Right cardiac atrium (tissue), 5 donors: ENCODE measurements at regions of chr2 and their contacts with region 1.

Region 1: GRCh38 chr2:19677825-19678518 is 223.8 kb downstream of the TTC32 start:
- DNase-seq: peak; percentile 87 to 92 (median 91)
- ATAC-seq: peak; percentile 89 to 92
- H3K4me3 ChIP-seq: no peak overlapping the region
- H3K27ac ChIP-seq: peak overlapping the region; percentile 89
- H3K4me1 ChIP-seq: peaks cover 4% of the 10 kb centered on the region
- H3K27me3 ChIP-seq: no peaks in the 10 kb centered on the region

Region 2: DNA sequence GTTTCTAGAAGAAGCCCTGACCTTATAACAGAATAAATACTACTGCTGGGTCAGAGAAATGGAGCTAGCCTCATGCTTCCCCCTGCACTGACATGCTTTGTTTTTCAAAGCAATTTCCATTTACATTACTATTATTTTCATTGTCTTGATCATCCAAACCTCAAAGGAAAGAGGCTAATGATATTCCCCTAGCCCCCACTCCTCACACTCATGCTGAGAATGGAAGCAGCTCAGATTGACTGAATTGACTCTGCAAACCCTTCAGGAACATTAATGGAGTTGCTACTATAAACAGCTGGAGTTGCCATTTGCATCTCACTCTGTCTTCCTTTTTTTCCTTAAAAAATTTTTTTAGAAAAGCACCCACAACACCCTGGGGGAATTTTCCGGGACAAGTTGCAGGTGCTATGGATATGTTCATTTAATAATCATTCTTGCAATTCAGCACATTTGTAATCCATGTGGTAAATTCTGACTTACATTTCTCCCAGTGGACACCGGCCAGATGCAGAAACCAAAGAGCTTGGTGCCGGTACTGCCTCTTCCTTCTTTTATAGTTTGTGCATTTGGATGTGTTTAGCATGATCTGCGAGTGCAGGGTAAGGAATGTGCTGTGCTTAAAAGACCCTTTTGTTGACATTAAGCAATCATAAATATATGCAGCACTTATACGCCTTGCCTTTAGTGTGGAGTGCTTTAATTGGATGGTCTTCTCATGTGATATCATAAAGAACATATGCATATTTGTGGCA is 216.3 kb before region 1 on chr2:
- intact Hi-C with region 1: no loop called
- DNase-seq: no peak
- ATAC-seq: no peak
- H3K4me3 ChIP-seq: no peak overlapping the region
- H3K27ac ChIP-seq: no peak overlapping the region
- H3K4me1 ChIP-seq: no peaks in the 10 kb centered on the region
- H3K27me3 ChIP-seq: no peaks in the 10 kb centered on the region

Region 3: DNA sequence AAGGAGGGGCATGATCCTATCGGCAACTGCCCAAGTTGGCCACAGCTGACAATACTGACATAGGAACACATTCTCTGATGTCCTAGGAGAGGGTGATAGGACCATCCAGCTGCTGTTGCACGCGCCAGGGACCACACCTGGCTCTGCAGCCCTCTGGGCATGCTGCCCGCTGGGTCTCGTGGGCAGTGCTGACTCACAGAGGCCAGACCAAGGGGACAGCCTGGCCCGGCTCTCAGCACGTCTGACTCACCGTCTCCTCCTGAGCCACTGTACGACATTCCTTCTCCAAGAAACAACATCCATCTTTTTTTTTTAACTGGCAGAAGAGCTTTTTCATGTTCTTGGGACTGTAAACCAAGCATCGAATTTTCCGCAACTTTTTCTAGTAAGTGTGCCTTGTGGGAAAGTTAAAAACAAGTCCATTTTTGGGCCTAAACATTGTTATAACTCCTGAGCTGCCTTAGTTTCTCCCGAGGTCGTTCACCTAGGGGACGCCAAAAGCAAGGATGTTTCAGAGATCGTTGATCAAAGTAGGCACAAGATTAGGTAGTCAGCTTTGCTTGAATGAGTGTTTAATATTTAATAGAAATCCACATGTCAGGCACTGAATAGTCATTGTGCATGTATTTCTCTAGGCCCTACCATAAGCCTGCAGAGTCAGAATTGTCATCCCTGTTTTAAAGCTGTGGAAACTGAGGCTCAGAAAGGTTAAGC is 123.6 kb after region 1 on chr2:
- intact Hi-C with region 1: loop called in 1 of 4 experiments (anchors 2 kb)
- DNase-seq: peak; percentile 86 to 90 (median 89)
- ATAC-seq: peak; percentile 91 to 95
- H3K4me3 ChIP-seq: no peak overlapping the region
- H3K27ac ChIP-seq: no peak overlapping the region
- H3K4me1 ChIP-seq: peaks cover 12% of the 10 kb centered on the region
- H3K27me3 ChIP-seq: no peaks in the 10 kb centered on the region

Region 4: GRCh38 chr2:19911799-19912509 is 234.0 kb after region 1 on chr2:
- intact Hi-C with region 1: no loop called
- DNase-seq: no peak
- ATAC-seq: no peak
- H3K4me3 ChIP-seq: no peak overlapping the region
- H3K27ac ChIP-seq: no peak overlapping the region
- H3K4me1 ChIP-seq: no peaks in the 10 kb centered on the region
- H3K27me3 ChIP-seq: no peaks in the 10 kb centered on the region